Activated naive CD4-positive, alpha-beta T cell treated with anti-CD3 and anti-CD28 coated beads, Interleukin-2, amount 10 ng/mL, durations not matched to agents 7 days and 5 days (primary cell): ENCODE measurements at regions of chr12 and their contacts with region 1.

Region 1: GRCh38 chr12:54579696-54580333 is 8.6 kb downstream of the PPP1R1A start:
- DNase-seq: peak; percentile 87
- H3K4me3 Mint-ChIP-seq: no peak overlapping the region
- H3K27ac Mint-ChIP-seq: no peak overlapping the region
- H3K4me1 Mint-ChIP-seq: no peaks in the 10 kb centered on the region
- H3K27me3 Mint-ChIP-seq: peaks cover 42% of the 10 kb centered on the region

Region 2: GRCh38 chr12:54526812-54527630 is 52.8 kb before region 1 on chr12:
- CTCF ChIA-PET with region 1: interaction called, 16 read pairs
- DNase-seq: peak; percentile 50
- H3K4me3 Mint-ChIP-seq: no peak overlapping the region
- H3K27ac Mint-ChIP-seq: peak overlapping the region; percentile 9
- H3K4me1 Mint-ChIP-seq: no peaks in the 10 kb centered on the region
- H3K27me3 Mint-ChIP-seq: no peaks in the 10 kb centered on the region

Region 3: GRCh38 chr12:54560374-54560858 is 19.4 kb before region 1 on chr12:
- CTCF ChIA-PET with region 1: interaction called, 58 read pairs
- DNase-seq: peak; percentile 93
- H3K4me3 Mint-ChIP-seq: peak overlapping the region; percentile 67
- H3K27ac Mint-ChIP-seq: peak overlapping the region; percentile 67
- H3K4me1 Mint-ChIP-seq: peaks cover 36% of the 10 kb centered on the region
- H3K27me3 Mint-ChIP-seq: peaks cover 8% of the 10 kb centered on the region

Region 4: GRCh38 chr12:54596526-54596946 is 16.7 kb after region 1 on chr12:
- CTCF ChIA-PET with region 1: interaction called, 39 read pairs
- DNase-seq: peak; percentile 68
- H3K4me3 Mint-ChIP-seq: no peak overlapping the region
- H3K27ac Mint-ChIP-seq: no peak overlapping the region
- H3K4me1 Mint-ChIP-seq: peaks cover 3% of the 10 kb centered on the region
- H3K27me3 Mint-ChIP-seq: peaks cover 51% of the 10 kb centered on the region

Region 5: GRCh38 chr12:54723379-54724256 is 143.8 kb after region 1 on chr12:
- CTCF ChIA-PET with region 1: no interaction called
- DNase-seq: peak; percentile 44
- H3K4me3 Mint-ChIP-seq: no peak overlapping the region
- H3K27ac Mint-ChIP-seq: no peak overlapping the region
- H3K4me1 Mint-ChIP-seq: peaks cover 32% of the 10 kb centered on the region
- H3K27me3 Mint-ChIP-seq: peaks cover 21% of the 10 kb centered on the region